Activated CD8-positive, alpha-beta T cell treated with anti-CD3 and anti-CD28 coated beads for 36 hours (primary cell): ENCODE measurements at regions of chr17 and their contacts with region 1.

Region 1: GRCh38 chr17:76264755-76265596 is at the start of gene UBALD2:
- DNase-seq: peak; percentile 100
- ATAC-seq: peak; percentile 81
- H3K4me3 Mint-ChIP-seq: peak within 1 kb of the TSS; percentile 96
- H3K27ac Mint-ChIP-seq: peak within 1 kb of the TSS; percentile 99
- H3K4me1 Mint-ChIP-seq: peaks cover 44% of the 10 kb centered on the region
- H3K27me3 Mint-ChIP-seq: no peaks in the 10 kb centered on the region
- CTCF ChIP-seq: no peak
- total RNA-seq, gene UBALD2: 267 to 270 TPM

Region 2: GRCh38 chr17:76141212-76142038 is 123.6 kb before region 1 on chr17 and contains the start of gene FOXJ1:
- CTCF ChIA-PET with region 1: interaction called, 5 read pairs
- POLR2A ChIA-PET with region 1: interaction called, 56 read pairs
- intact Hi-C with region 1: loop called (anchors 5 kb)
- DNase-seq: peak; percentile 92
- ATAC-seq: peak; percentile 67
- H3K4me3 Mint-ChIP-seq: peak within 1 kb of the TSS; percentile 72
- H3K27ac Mint-ChIP-seq: peak within 1 kb of the TSS; percentile 46
- H3K4me1 Mint-ChIP-seq: peaks cover 57% of the 10 kb centered on the region
- H3K27me3 Mint-ChIP-seq: peaks cover 1% of the 10 kb centered on the region
- CTCF ChIP-seq: no peak
- total RNA-seq, gene FOXJ1: 11.1 to 11.6 TPM

Region 3: DNA sequence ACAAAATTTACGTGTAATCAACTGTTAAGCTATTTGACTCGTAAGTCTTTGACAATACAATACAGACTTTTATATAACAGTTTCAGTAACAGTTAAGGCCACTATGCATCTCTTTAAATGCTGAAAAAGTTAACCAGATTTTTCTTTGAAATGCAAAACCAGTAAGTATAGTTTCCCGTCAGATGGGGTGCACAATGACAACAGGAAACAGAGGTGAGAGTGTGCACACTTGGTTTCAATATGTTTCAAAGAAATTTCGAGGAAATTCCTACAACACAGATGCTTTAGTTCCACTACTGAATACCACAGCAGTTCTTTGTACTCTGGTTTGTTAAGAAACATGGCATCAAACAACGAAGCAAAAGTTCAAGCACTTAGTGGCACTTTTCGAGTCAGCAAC is 73.1 kb before region 1 on chr17:
- CTCF ChIA-PET with region 1: interaction called, 18 read pairs
- POLR2A ChIA-PET with region 1: interaction called, 700 read pairs
- intact Hi-C with region 1: loop called (anchors 5 kb)
- DNase-seq: peak; percentile 65
- ATAC-seq: peak; percentile 82
- H3K4me3 Mint-ChIP-seq: peak overlapping the region; percentile 68
- H3K27ac Mint-ChIP-seq: peak overlapping the region; percentile 97
- H3K4me1 Mint-ChIP-seq: peaks cover 77% of the 10 kb centered on the region
- H3K27me3 Mint-ChIP-seq: no peaks in the 10 kb centered on the region
- CTCF ChIP-seq: no peak

Region 4: GRCh38 chr17:76219670-76220383 is 45.1 kb before region 1 on chr17:
- CTCF ChIA-PET with region 1: no interaction called
- POLR2A ChIA-PET with region 1: interaction called, 10 read pairs
- intact Hi-C with region 1: no loop called
- DNase-seq: no peak
- ATAC-seq: no peak
- H3K4me3 Mint-ChIP-seq: no peak overlapping the region
- H3K27ac Mint-ChIP-seq: peak overlapping the region; percentile 49
- H3K4me1 Mint-ChIP-seq: peaks cover 42% of the 10 kb centered on the region
- H3K27me3 Mint-ChIP-seq: no peaks in the 10 kb centered on the region
- CTCF ChIP-seq: no peak

Region 5: DNA sequence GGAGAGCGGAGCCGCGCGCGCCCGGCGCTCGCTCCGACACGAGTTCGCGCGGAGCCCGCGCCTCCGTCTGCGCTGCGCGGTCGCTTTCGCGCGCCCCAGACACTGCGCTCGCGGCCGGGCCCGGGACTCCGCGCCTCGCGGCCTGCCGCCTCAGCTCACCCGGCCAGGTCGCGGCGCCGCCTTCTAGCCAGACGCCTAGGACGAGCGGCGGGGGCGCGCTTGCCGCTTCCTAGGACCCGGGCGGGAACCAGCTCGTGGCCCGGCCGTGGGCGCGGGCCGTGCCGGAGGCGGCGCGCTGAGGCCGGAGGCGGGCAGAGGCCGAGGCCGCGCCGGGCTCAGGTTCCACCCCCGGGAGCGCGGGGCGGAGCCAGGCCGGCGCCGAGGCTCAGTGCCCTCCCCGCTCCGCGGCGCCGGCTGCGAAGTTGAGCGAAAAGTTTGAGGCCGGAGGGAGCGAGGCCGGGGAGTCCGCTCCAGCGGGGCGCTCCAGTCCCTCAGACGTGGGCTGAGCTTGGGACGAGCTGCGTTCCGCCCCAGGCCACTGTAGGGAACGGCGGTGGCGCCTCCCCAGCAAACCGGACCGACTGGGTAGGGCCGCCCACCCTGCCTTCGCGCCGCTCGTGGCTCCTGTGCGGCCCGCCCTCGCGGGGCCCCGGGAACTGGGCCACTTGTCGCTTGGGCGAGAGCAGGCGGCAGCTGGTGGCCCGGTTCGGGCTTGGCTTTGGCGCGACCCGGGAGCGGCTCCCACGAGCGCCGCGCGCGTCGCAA is 119.4 kb after region 1 on chr17 and contains the start of gene SPHK1:
- CTCF ChIA-PET with region 1: no interaction called
- POLR2A ChIA-PET with region 1: interaction called, 10 read pairs
- intact Hi-C with region 1: no loop called
- DNase-seq: peak; percentile 77
- ATAC-seq: peak; percentile 72
- H3K4me3 Mint-ChIP-seq: peak within 1 kb of the TSS; percentile 77
- H3K27ac Mint-ChIP-seq: peak within 1 kb of the TSS; percentile 93
- H3K4me1 Mint-ChIP-seq: peaks cover 3% of the 10 kb centered on the region
- H3K27me3 Mint-ChIP-seq: no peaks in the 10 kb centered on the region
- CTCF ChIP-seq: peak; percentile 15
- total RNA-seq, gene SPHK1: 15.7 to 17.7 TPM